Activated CD4-positive, alpha-beta memory T cell treated with anti-CD3 and anti-CD28 coated beads, Interleukin-2, amount 10 ng/mL, durations not matched to agents 7 days and 5 days (primary cell): ENCODE measurements at regions of chr6 and their contacts with region 1.

Region 1: GRCh38 chr6:28923318-28924102 is at the start of gene TRIM27:
- DNase-seq: peak; percentile 84
- H3K4me3 Mint-ChIP-seq: peak within 1 kb of the TSS; percentile 77
- H3K27ac Mint-ChIP-seq: peak within 1 kb of the TSS; percentile 94
- H3K4me1 Mint-ChIP-seq: peaks cover 39% of the 10 kb centered on the region
- H3K27me3 Mint-ChIP-seq: no peaks in the 10 kb centered on the region
- total RNA-seq, gene TRIM27: 56.8 to 58.0 TPM

Region 2: DNA sequence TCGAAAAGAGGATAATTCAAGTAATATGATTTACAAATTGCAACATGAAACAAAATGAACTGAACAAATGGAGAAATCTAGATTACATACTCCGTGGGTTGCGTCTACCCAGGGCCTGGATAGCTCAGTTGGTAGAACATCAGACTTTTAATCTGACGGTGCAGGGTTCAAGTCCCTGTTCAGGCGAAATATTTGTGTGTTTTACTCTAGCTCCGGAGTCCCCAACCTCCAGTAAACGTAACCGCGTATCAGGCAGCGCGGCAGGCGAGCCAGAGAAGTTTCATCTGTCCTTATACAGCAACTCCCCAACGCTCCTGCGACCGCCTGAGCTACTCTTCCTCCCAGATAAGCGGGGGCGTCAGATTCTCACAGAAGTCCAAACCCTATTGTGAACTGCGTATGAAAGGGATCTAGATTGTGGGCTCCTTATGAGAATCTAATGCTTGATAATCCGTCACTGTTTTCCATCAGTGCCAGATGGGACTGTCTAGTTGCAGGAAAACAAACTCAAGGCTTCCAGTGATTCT is 175.8 kb before region 1 on chr6:
- CTCF ChIA-PET with region 1: no interaction called
- POLR2A ChIA-PET with region 1: no interaction called
- DNase-seq: no peak
- H3K4me3 Mint-ChIP-seq: no peak overlapping the region
- H3K27ac Mint-ChIP-seq: no peak overlapping the region
- H3K4me1 Mint-ChIP-seq: no peaks in the 10 kb centered on the region
- H3K27me3 Mint-ChIP-seq: peaks cover 48% of the 10 kb centered on the region

Region 3: GRCh38 chr6:28863604-28864320 is 59.7 kb before region 1 on chr6:
- CTCF ChIA-PET with region 1: interaction called, 5 read pairs
- POLR2A ChIA-PET with region 1: interaction called, 80 read pairs
- DNase-seq: peak; percentile 85
- H3K4me3 Mint-ChIP-seq: peak overlapping the region; percentile 81
- H3K27ac Mint-ChIP-seq: peak overlapping the region; percentile 76
- H3K4me1 Mint-ChIP-seq: peaks cover 46% of the 10 kb centered on the region
- H3K27me3 Mint-ChIP-seq: peaks cover 12% of the 10 kb centered on the region

Region 4: DNA sequence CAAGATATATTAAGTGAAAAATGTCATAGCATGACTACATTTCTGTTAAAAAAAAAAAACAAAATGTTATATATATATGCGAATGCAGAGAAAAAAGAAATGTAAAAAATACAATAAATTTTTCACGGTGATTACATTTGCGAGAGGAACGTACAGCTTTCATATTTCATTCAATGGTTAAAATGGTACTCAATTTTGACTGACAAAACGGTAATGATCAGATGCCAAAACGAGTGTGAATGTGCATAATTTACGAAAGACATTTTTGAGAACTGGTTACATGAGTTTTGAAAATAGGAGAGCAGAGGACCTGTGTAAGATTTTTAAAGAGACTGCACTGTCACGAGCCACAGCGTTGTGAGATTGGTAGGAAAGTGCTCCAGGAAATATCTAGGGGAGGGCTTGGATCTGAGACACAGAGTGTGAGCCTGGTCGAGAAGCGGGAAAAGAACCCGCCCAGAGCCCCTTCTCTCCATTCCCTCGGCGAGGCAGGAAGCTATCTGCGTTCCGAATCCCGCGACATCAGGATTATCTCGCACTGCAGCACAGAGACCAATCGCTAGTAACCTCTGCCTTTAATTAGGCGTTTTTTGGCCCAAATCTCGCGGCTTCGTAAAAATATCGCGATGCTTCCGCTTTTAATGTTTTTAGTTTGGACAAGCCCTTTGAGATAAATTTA is 28.2 kb before region 1 on chr6:
- CTCF ChIA-PET with region 1: interaction called, 5 read pairs
- POLR2A ChIA-PET with region 1: interaction called, 114 read pairs
- DNase-seq: peak; percentile 95
- H3K4me3 Mint-ChIP-seq: peak overlapping the region; percentile 89
- H3K27ac Mint-ChIP-seq: peak overlapping the region; percentile 99
- H3K4me1 Mint-ChIP-seq: peaks cover 20% of the 10 kb centered on the region
- H3K27me3 Mint-ChIP-seq: peaks cover 2% of the 10 kb centered on the region

Region 5: GRCh38 chr6:28940858-28941680 is 17.6 kb after region 1 on chr6:
- CTCF ChIA-PET with region 1: interaction called, 22 read pairs
- POLR2A ChIA-PET with region 1: interaction called, 88 read pairs
- DNase-seq: peak; percentile 78
- H3K4me3 Mint-ChIP-seq: peak overlapping the region; percentile 88
- H3K27ac Mint-ChIP-seq: peak overlapping the region; percentile 93
- H3K4me1 Mint-ChIP-seq: peaks cover 51% of the 10 kb centered on the region
- H3K27me3 Mint-ChIP-seq: no peaks in the 10 kb centered on the region

Region 6: DNA sequence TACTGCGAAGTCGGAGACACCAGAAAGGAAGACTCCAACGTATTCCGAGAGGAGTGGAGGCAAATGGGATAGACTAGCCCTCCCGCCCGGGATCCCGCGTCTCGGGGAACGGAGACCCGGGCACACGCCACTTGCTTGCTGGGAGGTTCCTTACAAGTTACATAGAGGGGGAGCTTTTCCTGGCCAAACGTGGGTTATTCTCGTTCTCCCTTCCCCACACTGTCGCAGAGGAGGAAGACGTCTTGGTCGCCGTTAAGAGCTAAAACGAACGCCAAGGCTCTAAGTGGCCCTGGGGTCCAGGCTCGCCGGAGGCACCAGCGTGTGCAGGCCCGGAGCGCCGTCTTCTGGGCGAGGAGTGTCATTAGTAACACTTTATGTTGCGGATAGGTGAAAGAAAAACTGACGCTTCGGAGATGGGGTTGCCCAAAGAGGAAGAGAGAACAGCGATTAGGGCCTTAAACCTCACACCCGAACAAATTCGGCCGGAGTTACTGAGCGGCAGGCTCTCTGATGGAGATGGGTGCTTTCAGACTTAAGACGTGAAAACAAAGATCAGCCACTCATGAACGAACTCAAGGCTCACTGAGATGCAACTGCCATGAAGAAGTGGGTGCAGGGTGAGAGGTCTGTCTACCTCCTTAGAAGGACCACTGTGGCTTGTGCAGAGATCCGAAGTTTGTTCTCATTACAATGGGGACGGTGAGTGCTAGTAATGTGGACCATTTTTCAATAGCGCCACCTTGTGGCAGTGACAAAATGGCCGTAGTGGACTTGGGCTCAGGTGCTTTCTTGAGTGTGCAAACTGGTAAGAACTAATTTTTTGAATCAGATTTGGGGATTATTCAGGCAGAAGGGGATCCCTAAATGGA is 93.3 kb after region 1 on chr6:
- CTCF ChIA-PET with region 1: interaction called, 10 read pairs
- POLR2A ChIA-PET with region 1: interaction called, 35 read pairs
- DNase-seq: peak; percentile 86
- H3K4me3 Mint-ChIP-seq: peak overlapping the region; percentile 81
- H3K27ac Mint-ChIP-seq: peak overlapping the region; percentile 80
- H3K4me1 Mint-ChIP-seq: peaks cover 18% of the 10 kb centered on the region
- H3K27me3 Mint-ChIP-seq: peaks cover 5% of the 10 kb centered on the region

Region 7: DNA sequence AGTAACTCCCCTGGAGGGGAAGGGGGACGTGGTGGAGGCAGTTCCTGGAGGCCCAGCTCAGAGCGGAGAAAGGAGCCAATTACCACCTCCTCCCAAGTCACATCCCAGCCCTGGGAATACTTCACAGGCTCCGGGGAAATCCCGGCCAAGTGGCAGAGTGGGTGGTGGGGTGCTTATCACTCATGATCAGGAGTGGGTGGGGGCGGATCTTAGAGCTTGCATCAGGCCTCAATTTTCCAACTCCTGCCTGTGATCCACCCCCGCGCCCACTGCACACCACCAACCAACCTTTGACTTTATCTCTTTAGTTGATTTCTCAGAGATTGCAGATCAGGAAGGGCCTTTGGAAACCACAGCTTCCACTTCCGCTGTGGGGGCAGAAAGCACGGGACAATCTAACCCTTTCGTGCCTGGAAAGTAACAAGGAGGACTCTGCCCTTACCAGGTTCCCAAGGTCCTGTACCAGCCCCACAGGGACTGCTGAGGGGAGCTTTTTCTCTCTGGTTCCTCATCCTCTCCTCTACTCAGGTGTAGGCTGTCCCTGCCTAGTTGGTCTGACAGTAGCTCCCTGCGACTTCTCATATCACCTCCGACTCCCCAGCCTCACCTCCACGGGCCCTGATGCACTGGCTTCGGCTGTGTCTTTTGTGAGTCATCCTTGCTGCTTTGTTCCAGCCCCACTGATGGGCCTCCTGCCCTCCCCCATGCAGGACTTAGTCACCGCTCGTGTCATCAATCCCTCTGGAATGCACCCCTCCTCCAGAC is 1845.8 kb after region 1 on chr6:
- CTCF ChIA-PET with region 1: no interaction called
- POLR2A ChIA-PET with region 1: no interaction called
- DNase-seq: peak; percentile 72
- H3K4me3 Mint-ChIP-seq: peak overlapping the region; percentile 28
- H3K27ac Mint-ChIP-seq: peak overlapping the region; percentile 65
- H3K4me1 Mint-ChIP-seq: peaks cover 52% of the 10 kb centered on the region
- H3K27me3 Mint-ChIP-seq: peaks cover 7% of the 10 kb centered on the region